PC-9 (cell line): ENCODE measurements at regions of chr7 and their contacts with region 1.

Region 1: DNA sequence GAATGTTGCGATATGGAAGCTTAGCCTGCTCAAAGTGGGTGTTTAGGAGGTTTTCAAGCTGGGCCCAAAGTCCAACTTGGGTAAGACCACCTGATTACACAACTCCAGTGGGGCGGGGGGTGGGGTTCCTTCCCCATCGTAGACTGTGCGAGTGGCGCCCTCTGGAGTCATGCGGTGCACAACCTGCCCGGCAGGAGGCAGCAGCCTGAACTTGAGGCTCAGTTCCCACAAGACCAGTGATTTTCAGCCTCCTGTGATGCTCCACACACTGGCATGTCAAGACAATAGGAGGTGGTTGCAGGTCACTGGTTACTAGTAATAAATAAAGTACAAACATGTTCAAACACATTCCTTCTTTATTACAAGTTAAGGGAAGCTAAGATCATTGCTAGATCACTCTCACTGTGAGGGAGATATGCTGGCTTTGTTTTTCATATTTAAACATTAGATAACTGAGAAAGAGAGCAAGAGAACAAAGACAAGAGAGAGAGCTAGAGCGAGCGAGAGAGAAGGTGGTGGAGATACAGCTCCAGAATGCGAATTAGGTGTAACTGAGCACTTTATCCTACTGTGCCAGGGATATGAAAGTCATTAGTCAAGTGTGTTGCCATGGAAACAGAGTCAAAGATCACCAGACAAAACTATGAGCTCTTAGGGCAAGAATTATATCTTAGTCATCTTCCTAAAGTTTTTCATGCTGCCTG is 97.4 kb upstream of the BMPER start:
- DNase-seq: peak; percentile 31 to 43
- H3K4me3 ChIP-seq: no peak overlapping the region
- H3K27ac ChIP-seq: no peak overlapping the region
- H3K4me1 ChIP-seq: no peaks in the 10 kb centered on the region
- H3K27me3 ChIP-seq: peaks cover 15% of the 10 kb centered on the region
- CTCF ChIP-seq: peak; percentile 50; the same call in 1 of the 2 replicates

Region 2: DNA sequence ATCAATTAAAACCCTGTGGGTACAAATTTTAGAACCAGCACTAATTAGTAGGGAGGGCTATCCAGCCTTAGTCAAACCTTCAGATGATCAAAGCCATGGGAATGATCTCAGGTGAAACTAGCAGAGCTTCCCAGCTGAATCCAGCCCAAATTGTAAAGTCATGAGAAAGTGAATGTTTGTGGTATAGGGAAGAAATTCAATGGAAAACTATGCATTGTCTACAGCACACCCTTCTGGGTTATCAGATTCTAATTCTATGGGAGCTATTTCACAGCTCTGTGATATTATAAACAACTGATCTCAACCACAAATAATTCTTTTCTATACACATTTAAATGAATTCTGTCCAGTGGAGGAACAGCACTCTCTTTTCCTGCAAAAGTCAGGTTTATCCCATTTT is 72.9 kb after region 1 on chr7:
- CTCF ChIA-PET with region 1: no interaction called
- POLR2A ChIA-PET with region 1: no interaction called
- intact Hi-C with region 1: loop called (anchors 2 kb)
- DNase-seq: no peak
- H3K4me3 ChIP-seq: no peak overlapping the region
- H3K27ac ChIP-seq: no peak overlapping the region
- H3K4me1 ChIP-seq: no peaks in the 10 kb centered on the region
- H3K27me3 ChIP-seq: no peaks in the 10 kb centered on the region
- CTCF ChIP-seq: no peak

Region 3: DNA sequence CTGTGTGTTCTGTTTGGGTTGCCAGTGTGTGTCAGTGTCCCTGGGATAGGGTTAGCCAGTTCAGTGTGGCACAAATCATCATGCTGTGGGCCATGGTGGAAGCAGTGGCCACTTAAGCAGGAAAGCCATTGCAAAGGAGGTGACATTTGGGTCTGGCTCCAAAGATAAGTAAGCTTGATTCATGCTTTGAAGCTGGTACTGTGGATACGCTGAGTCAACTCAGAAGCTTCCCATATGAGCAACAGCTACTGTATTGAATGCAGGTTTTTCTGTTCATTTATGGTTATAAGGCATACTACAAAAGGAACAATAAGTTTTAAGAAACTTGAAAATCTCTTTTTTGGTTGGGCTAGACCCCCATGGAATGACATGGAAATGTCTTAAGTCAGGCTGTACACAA is 240.5 kb after region 1 on chr7:
- CTCF ChIA-PET with region 1: no interaction called
- POLR2A ChIA-PET with region 1: no interaction called
- intact Hi-C with region 1: no loop called
- DNase-seq: no peak
- H3K4me3 ChIP-seq: no peak overlapping the region
- H3K27ac ChIP-seq: no peak overlapping the region
- H3K4me1 ChIP-seq: no peaks in the 10 kb centered on the region
- H3K27me3 ChIP-seq: no peaks in the 10 kb centered on the region
- CTCF ChIP-seq: no peak